ENCODE measurements at regions of chr19 and their contacts with region 1.

Region 1: DNA sequence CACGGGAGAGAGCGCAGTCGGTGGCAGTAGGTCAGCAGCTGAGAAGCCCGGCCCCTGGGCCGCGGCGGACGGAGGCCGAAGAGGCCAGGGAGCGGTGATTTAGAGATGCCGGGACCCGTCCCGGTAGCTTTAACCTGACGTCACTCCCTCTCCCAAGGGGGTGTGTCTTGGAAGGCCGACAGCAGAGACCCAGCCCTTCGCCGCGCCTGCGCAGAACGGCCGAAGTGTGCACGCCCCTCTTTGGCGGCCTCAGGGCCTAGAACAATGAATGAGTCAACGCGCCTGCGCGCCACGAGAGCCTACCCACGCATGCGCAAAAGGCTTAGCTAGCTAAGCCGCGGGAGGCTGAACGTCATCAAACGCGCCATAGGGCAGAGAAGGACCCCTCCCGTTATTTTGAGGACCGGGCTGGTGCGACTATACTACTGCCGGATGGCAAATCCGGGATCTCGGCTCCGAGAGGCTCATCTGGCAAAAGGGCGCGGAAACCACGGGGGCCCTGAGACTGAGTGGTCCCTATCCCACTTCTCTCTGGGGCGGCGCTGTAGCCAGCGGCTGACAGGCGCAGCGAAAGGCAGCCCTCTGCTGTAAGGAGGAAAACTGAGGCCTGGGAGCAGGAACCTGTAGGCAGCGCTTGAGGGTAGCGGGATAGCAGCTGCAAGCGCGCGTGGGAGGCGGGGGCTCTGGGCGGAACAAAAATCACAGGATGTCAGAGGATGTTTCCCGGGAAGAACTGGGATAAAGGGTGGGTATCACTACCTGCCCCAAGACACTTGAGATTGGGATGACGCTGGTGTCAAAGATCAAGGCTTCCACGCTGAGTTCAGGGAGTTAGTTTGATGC is at the starts of genes IRGQ and ZNF576:
- DNase-seq: peak; percentile 99
- ATAC-seq: peak; percentile 83
- H3K4me3 Mint-ChIP-seq: peak within 1 kb of the TSS; percentile 98
- H3K27ac Mint-ChIP-seq: peak within 1 kb of the TSS; percentile 98
- H3K4me1 Mint-ChIP-seq: peaks cover 42% of the 10 kb centered on the region
- H3K27me3 Mint-ChIP-seq: no peaks in the 10 kb centered on the region
- CTCF ChIP-seq: no peak
- total RNA-seq, gene IRGQ: 13.1 and 14.1 TPM in 2 replicates
- total RNA-seq, gene ZNF576: 14.5 and 17.3 TPM in 2 replicates

Region 2: DNA sequence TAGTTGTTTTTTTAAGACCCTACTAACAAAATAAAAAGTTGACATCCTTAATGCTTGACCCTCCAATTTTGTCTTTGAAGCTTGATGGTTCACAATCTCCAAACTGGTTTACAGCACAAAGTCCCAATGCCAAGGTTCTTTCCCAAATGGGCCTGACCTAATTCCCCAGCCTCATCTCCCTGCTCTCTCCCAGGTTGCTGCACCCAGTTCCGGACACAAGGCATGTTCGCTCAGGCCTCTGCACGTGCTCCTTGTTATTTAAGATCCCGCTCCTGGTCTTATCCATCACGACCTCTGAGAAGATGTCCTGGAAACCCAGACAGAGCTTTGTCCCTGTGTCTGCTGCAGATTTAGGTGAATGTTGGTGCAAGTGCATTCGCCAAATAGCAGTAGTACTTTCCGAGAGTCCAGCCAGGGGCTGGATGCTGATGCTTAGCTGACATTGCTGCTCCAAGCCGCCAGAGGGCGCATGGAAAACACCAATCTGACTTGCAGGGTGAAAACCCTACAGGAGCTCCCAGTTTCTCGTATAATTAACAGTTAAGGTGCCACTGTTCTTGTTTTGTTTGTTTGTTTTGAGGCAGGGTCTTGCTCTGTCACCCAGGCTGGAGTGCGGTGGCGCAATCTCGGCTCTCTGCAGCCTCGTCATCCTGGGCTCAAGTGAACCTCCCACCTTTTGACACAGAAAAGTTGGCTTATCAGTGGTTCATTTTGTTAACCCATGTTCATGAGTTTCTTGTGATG is 149.3 kb before region 1 on chr19:
- CTCF ChIA-PET with region 1: interaction called, 24 read pairs
- POLR2A ChIA-PET with region 1: interaction called, 5 read pairs
- intact Hi-C with region 1: loop called (anchors 1 kb)
- DNase-seq: peak; percentile 67
- ATAC-seq: peak; percentile 90
- H3K4me3 Mint-ChIP-seq: no peak overlapping the region
- H3K27ac Mint-ChIP-seq: no peak overlapping the region
- H3K4me1 Mint-ChIP-seq: peaks cover 6% of the 10 kb centered on the region
- H3K27me3 Mint-ChIP-seq: no peaks in the 10 kb centered on the region
- CTCF ChIP-seq: peak; percentile 47

Region 3: GRCh38 chr19:43532962-43533545 is 63.2 kb before region 1 on chr19 and contains the start of gene ZNF575:
- CTCF ChIA-PET with region 1: interaction called, 43 read pairs
- POLR2A ChIA-PET with region 1: interaction called, 28 read pairs
- intact Hi-C with region 1: loop called (anchors 1 kb)
- DNase-seq: peak; percentile 77
- ATAC-seq: peak; percentile 45
- H3K4me3 Mint-ChIP-seq: peak within 1 kb of the TSS; percentile 97
- H3K27ac Mint-ChIP-seq: peak within 1 kb of the TSS; percentile 98
- H3K4me1 Mint-ChIP-seq: peaks cover 19% of the 10 kb centered on the region
- H3K27me3 Mint-ChIP-seq: no peaks in the 10 kb centered on the region
- CTCF ChIP-seq: no peak
- total RNA-seq, gene ZNF575: 1.9 and 3.4 TPM in 2 replicates

Region 4: GRCh38 chr19:43575156-43575950 is 20.9 kb before region 1 on chr19 and contains the starts of genes PINLYP and XRCC1:
- CTCF ChIA-PET with region 1: interaction called, 8 read pairs
- POLR2A ChIA-PET with region 1: interaction called, 13 read pairs
- intact Hi-C with region 1: loop called (anchors 1 kb)
- DNase-seq: peak; percentile 87
- ATAC-seq: peak; percentile 97
- H3K4me3 Mint-ChIP-seq: peak within 1 kb of the TSS; percentile 96
- H3K27ac Mint-ChIP-seq: peak within 1 kb of the TSS; percentile 92
- H3K4me1 Mint-ChIP-seq: peaks cover 44% of the 10 kb centered on the region
- H3K27me3 Mint-ChIP-seq: no peaks in the 10 kb centered on the region
- CTCF ChIP-seq: no peak
- total RNA-seq, gene PINLYP: 1.9 and 2.1 TPM in 2 replicates
- total RNA-seq, gene XRCC1: 31.9 and 34.5 TPM in 2 replicates

Region 5: DNA sequence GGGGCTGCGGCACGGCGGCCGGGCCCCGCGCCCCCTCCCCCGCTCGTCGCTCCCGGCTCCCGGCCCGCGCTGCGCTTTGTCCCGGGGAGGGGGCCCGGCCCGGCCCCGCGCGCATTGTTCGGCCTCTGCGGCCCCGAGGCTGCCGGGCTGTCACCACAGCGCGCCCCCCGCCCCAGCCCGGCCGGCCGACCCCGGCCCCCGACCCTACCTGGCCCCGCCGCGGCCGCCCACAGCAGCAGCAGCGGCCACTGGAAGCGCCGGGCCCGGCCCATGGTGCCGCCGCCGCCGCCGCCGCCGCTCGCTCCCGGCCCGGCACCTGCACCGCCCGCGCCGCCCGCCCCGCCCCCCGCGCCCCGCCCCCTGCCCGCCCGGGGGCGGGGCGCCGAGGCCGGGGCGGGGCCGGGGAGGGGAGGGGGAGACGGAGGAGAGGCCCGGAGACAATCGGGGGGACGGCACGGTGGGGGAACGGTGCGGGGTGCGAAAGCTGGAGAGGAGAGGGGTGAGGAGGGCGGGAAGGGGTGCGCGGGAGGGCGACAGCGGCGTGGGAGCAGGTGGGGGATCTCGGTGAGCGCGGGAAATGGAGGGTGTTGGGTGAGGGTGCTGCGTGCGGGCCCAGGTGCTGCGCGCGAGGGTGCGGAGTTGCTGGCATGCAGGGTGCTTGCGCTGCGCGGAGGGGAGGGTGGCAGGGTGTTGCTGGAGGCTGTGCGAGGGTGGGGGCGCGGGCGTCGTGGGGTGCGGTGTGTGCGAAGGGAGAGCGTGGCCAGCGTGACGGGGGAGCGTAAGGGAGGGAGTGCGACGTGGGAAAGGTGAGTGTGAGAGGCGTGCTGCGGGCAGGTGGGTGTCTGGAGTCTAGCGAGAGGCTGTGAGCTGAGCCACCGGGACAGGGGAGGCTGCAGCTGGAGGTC is 43.6 kb after region 1 on chr19 and contains the start of gene CADM4:
- CTCF ChIA-PET with region 1: no interaction called
- POLR2A ChIA-PET with region 1: no interaction called
- intact Hi-C with region 1: loop called (anchors 5 kb)
- DNase-seq: peak; percentile 49
- ATAC-seq: peak; percentile 85
- H3K4me3 Mint-ChIP-seq: peak within 1 kb of the TSS; percentile 80
- H3K27ac Mint-ChIP-seq: no peak within 1 kb of the TSS
- H3K4me1 Mint-ChIP-seq: peaks cover 23% of the 10 kb centered on the region
- H3K27me3 Mint-ChIP-seq: peaks cover 34% of the 10 kb centered on the region
- CTCF ChIP-seq: no peak
- total RNA-seq, gene CADM4: 0.95 TPM in 1 of 2 replicates, not detected in the other

Region 6: DNA sequence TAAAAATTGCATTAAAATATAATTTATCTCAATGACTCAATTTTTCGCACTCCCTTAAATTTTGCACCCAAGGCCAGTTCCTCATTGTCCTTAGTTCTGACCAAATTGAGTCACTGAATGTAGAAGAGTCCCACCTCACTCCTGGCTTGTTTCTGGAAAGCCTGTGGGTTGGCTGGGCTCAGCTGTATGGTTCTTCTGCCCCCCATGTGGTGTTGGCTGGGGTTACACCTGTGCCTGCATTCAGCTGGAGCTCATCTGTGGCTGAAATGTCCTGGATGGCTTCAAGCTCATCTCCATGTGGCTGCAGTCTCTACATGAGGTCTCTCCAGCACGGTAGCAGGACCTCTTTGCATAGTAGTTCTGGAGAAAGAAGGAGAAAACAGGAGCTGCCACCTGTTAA is 112.5 kb after region 1 on chr19:
- CTCF ChIA-PET with region 1: no interaction called
- POLR2A ChIA-PET with region 1: no interaction called
- intact Hi-C with region 1: no loop called
- DNase-seq: no peak
- ATAC-seq: no peak
- H3K4me3 Mint-ChIP-seq: no peak overlapping the region
- H3K27ac Mint-ChIP-seq: no peak overlapping the region
- H3K4me1 Mint-ChIP-seq: no peaks in the 10 kb centered on the region
- H3K27me3 Mint-ChIP-seq: peaks cover 12% of the 10 kb centered on the region
- CTCF ChIP-seq: no peak

Region 7: GRCh38 chr19:43718627-43719377 is 122.6 kb after region 1 on chr19:
- CTCF ChIA-PET with region 1: no interaction called
- POLR2A ChIA-PET with region 1: no interaction called
- intact Hi-C with region 1: no loop called
- DNase-seq: no peak
- ATAC-seq: no peak
- H3K4me3 Mint-ChIP-seq: no peak overlapping the region
- H3K27ac Mint-ChIP-seq: no peak overlapping the region
- H3K4me1 Mint-ChIP-seq: peaks cover 2% of the 10 kb centered on the region
- H3K27me3 Mint-ChIP-seq: peaks cover 2% of the 10 kb centered on the region
- CTCF ChIP-seq: no peak

Region 8: DNA sequence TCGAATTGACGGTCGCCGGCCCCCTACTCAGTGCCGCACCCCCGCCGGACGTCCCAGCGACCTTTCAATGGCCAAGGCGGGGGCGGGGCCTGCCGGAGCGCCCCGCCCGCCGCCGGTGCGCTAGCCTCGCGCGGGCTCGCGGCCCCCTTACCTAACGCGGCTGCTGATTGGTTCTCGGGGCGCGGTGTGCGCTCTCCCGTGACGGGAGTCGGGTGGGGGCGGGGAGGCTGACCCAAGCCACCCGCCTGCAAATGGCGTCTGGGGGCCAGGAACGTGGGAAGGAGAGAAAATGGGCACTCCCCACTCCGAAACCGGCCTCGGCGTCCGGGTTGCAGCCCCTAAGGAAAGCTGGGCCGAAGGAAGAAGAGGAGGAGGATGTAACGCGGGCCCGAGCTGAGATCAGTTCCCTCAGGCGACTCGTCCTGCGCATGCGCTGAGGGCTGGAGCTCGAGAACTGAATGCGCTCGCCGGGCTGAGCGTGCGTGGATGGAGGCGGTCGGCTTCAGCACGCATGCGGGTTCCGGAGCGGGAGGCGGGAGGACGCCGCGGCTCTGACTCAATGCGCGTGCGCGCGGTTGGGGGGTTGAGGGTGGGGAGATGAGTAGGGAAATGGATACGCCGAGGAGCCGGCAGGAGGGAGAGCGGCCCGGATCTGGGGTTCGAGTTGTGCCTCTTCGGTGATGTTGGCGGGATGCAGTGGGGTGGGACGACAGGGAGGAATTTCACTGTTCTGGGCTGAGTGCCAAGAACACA is 158.5 kb after region 1 on chr19 and contains the start of gene SMG9:
- CTCF ChIA-PET with region 1: no interaction called
- POLR2A ChIA-PET with region 1: interaction called, 12 read pairs
- intact Hi-C with region 1: no loop called
- DNase-seq: peak; percentile 97
- ATAC-seq: peak; percentile 74
- H3K4me3 Mint-ChIP-seq: peak within 1 kb of the TSS; percentile 90
- H3K27ac Mint-ChIP-seq: peak within 1 kb of the TSS; percentile 98
- H3K4me1 Mint-ChIP-seq: peaks cover 81% of the 10 kb centered on the region
- H3K27me3 Mint-ChIP-seq: no peaks in the 10 kb centered on the region
- CTCF ChIP-seq: no peak
- total RNA-seq, gene SMG9: 91.2 and 105 TPM in 2 replicates

Region 9: DNA sequence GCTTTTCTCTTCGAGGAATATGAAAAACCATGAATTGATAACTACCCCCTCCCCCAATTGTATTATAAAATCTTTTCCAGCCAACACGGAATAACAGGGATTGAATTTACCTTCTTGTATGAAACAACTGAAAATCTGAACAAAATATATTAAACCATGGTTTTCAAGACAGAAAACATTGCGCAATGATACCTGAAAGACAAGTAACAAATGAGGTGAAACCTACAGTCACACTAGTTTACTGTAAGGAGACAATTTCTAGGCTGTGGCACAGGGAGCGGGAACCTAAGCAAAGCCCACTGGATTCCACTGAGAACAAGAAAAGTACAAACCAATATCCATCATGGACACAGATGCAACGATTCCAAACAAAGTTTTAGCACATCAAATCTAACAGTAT is 284.3 kb after region 1 on chr19:
- CTCF ChIA-PET with region 1: no interaction called
- POLR2A ChIA-PET with region 1: no interaction called
- intact Hi-C with region 1: no loop called
- DNase-seq: no peak
- ATAC-seq: no peak
- H3K4me3 Mint-ChIP-seq: no peak overlapping the region
- H3K27ac Mint-ChIP-seq: no peak overlapping the region
- H3K4me1 Mint-ChIP-seq: no peaks in the 10 kb centered on the region
- H3K27me3 Mint-ChIP-seq: no peaks in the 10 kb centered on the region
- CTCF ChIP-seq: no peak

Measured in activated B cell treated with CpG ODN at 0.5 μM for 24 hours (primary cell).